Heart left ventricle (tissue), 16 donors: ENCODE measurements at regions of chr7 and their contacts with region 1.

Region 1: GRCh38 chr7:69962186-69963065 is 364.2 kb downstream of the AUTS2 start:
- DNase-seq: peak in 4 of 5 donors; percentile 59 to 75 (median 72)
- ATAC-seq: peak; percentile 75 to 89 (median 84)
- H3K4me3 ChIP-seq: peak overlapping the region in 1 of 12 donors; percentile 6
- H3K27ac ChIP-seq: peak overlapping the region in 8 of 12 donors; percentile 13 to 63 (median 46)
- H3K4me1 ChIP-seq: peaks cover 2 to 51% (median 37%) of the 10 kb centered on the region in 12 donors
- H3K27me3 ChIP-seq: no peaks in the 10 kb centered on the region
- CTCF ChIP-seq: no peak
- POLR2A ChIP-seq: no peak

Region 2: DNA sequence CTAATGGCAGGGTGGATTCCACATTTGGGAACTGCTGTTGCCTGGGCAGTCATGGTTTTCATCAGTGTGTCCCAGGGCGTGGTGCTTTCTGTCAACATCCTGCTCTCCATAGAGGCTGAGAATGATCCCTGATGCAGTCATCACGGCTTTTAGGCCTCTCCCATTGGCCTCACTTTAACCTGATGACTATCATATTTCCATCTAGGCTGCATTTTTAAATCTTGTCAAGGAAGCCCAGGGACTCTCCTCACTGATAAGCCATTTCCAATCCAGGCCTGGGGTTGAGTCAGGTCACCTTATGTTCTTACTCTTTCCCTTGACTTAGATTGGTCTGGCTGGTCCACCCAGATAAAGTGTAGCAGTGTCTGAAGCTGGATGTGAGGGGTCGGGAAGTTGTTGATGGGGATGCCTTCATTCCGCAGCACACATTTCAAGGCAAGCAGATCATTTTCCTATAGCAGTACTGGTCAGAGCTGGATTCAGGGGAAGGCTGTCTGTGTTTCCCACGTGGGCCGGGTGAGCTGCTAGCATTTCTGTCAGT is 187.1 kb before region 1 on chr7:
- intact Hi-C with region 1: loop called in 1 of 10 experiments (anchors 10 kb)
- DNase-seq: peak in 4 of 5 donors; percentile 35 to 64 (median 54)
- ATAC-seq: peak; percentile 77 to 95 (median 95)
- H3K4me3 ChIP-seq: no peak overlapping the region
- H3K27ac ChIP-seq: peak overlapping the region in 8 of 12 donors; percentile 2 to 56 (median 46)
- H3K4me1 ChIP-seq: peaks cover 0 to 21% (median 0%) of the 10 kb centered on the region in 12 donors
- H3K27me3 ChIP-seq: no peaks in the 10 kb centered on the region
- CTCF ChIP-seq: no peak
- POLR2A ChIP-seq: no peak

Region 3: DNA sequence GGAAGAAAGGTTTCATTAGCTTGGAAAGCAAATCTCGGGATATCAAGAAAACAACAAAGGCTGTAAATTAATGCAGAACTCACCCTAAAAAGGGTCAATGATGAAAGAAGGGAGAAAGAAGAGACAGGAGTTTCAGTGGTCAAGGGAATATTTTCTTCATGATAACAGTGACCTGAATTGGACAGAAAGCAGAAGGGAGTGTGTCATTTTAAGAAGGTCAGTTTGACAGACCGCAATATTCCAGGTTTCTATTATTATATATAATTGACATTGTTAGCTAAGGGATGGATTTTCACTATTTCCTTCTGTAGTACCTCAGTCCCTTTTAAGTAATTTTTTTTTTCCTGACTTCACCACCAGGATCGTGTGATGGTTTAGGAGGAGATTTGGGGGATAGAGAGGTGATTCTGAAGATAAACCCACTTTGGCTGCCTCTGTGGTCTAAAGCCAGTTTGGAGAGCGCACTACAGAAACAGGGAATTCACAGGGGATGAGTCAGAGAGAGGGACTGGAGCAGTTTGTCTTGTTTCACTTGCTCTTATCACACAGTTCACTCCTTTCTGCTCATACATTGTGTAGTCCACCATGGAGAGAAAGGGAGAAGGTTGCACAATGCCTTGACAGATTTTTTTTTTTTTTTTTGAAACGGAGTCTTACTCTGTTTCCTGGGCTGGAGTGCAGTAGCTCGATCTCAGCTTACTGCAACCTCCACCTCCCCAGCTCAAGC is 53.8 kb after region 1 on chr7:
- intact Hi-C with region 1: loop called in 3 of 10 experiments (anchors 5 to 10 kb)
- DNase-seq: no peak
- ATAC-seq: peak in 3 of 4 donors; percentile 47 to 92 (median 89)
- H3K4me3 ChIP-seq: no peak overlapping the region
- H3K27ac ChIP-seq: no peak overlapping the region
- H3K4me1 ChIP-seq: peaks cover 0 to 29% (median 2%) of the 10 kb centered on the region in 12 donors
- H3K27me3 ChIP-seq: no peaks in the 10 kb centered on the region
- CTCF ChIP-seq: no peak
- POLR2A ChIP-seq: no peak

Region 4: GRCh38 chr7:70027867-70028266 is 65.4 kb after region 1 on chr7:
- intact Hi-C with region 1: loop called in 5 of 10 experiments (anchors 5 to 10 kb)
- DNase-seq: no peak
- ATAC-seq: no peak
- H3K4me3 ChIP-seq: no peak overlapping the region
- H3K27ac ChIP-seq: no peak overlapping the region
- H3K4me1 ChIP-seq: peaks cover 0 to 35% (median 6%) of the 10 kb centered on the region in 12 donors
- H3K27me3 ChIP-seq: no peaks in the 10 kb centered on the region
- CTCF ChIP-seq: no peak
- POLR2A ChIP-seq: no peak